ENCODE measurements at regions of chr12 and their contacts with region 1.

Region 1: DNA sequence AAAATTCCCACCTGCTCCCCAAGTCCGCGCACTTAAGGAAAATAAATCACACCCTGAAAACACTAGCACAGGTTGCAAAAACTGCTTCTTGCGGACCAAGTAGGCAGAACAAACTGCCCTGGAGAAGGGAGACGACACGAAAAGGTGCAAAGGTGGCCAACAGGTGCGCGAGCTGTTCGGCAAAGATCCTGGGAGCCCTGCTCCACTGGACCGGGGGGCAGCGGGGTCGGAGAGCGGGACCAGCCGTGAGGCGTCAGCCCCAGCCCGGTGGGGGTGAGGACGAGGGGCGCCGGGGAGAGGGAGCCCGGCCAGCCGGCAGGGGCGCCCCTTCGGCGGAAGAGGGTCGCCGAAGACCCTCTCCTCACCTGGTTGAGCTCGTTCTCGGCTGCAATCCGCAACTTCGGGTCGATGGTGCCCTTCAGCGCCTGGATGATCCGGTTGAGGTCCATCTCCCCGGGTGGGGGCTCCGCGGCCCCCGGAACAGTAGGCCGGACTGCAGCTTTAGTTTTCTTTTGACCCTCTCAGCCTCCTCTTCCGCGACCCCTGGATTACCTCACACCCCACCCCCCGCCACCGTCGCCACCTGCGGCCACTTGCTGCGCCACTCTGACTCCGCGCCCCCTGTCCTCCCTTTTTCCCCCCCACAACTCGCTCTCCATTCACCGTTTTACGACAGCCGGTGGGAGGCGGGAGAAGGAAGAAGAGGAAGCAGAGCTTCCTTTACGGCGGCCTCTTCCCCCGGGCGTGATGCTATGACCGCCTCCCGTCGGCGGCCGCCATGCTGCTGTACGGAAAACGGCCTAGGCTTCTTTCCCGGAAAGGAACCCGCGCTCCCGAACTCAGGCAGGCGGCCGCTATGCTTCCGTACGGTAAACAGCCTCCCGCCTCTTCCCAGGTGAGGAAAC is at the start of gene IPO8:
- DNase-seq: peak; percentile 77 to 95
- H3K4me3 ChIP-seq: peak within 1 kb of the TSS; percentile 81 to 95
- H3K27ac ChIP-seq: peak within 1 kb of the TSS; percentile 62 to 68
- H3K4me1 ChIP-seq: peaks cover 10 to 11% of the 10 kb centered on the region in 2 donors
- H3K27me3 ChIP-seq: no peaks in the 10 kb centered on the region
- CTCF ChIP-seq: peak in 1 of 3 experiments; percentile 20
- total RNA-seq, gene IPO8: 79.7 TPM

Region 2: DNA sequence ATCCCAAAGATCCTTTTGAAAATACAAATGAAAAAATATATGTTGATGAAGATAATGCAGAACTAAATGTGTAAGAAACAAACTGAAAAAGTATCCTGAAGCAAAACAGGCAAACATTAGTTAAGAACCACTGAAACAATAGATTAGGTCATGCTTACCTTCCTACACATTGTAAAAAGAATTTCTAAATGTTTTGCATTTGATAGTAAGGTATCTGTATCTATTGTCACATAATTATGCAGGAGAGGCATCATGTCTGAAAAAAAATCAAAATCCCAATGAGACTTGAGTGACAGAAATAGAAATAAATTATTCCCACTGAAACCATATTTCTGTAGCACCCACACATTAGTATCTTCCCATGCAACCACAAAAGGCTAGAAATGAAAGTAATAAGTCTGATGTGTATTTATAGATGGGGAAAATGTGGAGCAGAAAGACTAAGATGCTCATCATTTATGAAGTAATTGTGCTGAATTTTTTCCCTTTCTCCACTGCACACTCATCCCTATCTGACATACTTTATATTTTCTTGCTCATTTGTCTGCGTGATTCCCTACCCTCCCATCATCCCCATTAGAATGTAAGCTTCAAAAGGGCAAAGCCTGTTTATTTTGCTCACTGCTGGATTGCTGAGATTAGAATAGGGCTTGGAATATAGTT is 43.3 kb before region 1 on chr12:
- intact Hi-C with region 1: no loop called
- DNase-seq: no peak
- H3K4me3 ChIP-seq: no peak overlapping the region
- H3K27ac ChIP-seq: no peak overlapping the region
- H3K4me1 ChIP-seq: no peaks in the 10 kb centered on the region
- H3K27me3 ChIP-seq: no peaks in the 10 kb centered on the region
- CTCF ChIP-seq: no peak

Region 3: GRCh38 chr12:30732954-30733637 is 37.6 kb after region 1 on chr12:
- intact Hi-C with region 1: no loop called
- DNase-seq: no peak
- H3K4me3 ChIP-seq: no peak overlapping the region
- H3K27ac ChIP-seq: no peak overlapping the region
- H3K4me1 ChIP-seq: no peaks in the 10 kb centered on the region
- H3K27me3 ChIP-seq: no peaks in the 10 kb centered on the region
- CTCF ChIP-seq: no peak

Region 4: GRCh38 chr12:30795410-30796312 is 100.2 kb after region 1 on chr12:
- intact Hi-C with region 1: loop called (anchors 5 kb)
- DNase-seq: peak in 1 of 2 donors; percentile 89
- H3K4me3 ChIP-seq: peak overlapping the region; percentile 66 to 76
- H3K27ac ChIP-seq: peak overlapping the region; percentile 68 to 75
- H3K4me1 ChIP-seq: peaks cover 5 to 9% of the 10 kb centered on the region in 2 donors
- H3K27me3 ChIP-seq: no peaks in the 10 kb centered on the region
- CTCF ChIP-seq: no peak

Measured in ascending aorta (tissue), 2 donors.